Activated B cell treated with CpG ODN at 0.5 μM for 24 hours (primary cell): ENCODE measurements at regions of chr9 and their contacts with region 1.

Region 1: GRCh38 chr9:19456996-19457692 is 48.3 kb downstream of the ACER2 start:
- DNase-seq: peak; percentile 32
- ATAC-seq: peak; percentile 97
- H3K4me3 Mint-ChIP-seq: no peak overlapping the region
- H3K27ac Mint-ChIP-seq: no peak overlapping the region
- H3K4me1 Mint-ChIP-seq: peaks cover 13% of the 10 kb centered on the region
- H3K27me3 Mint-ChIP-seq: no peaks in the 10 kb centered on the region
- CTCF ChIP-seq: peak; percentile 80

Region 2: GRCh38 chr9:18442629-18443491 is 1014.3 kb before region 1 on chr9:
- CTCF ChIA-PET with region 1: no interaction called
- POLR2A ChIA-PET with region 1: no interaction called
- intact Hi-C with region 1: loop called (anchors 2 kb)
- DNase-seq: no peak
- ATAC-seq: peak; percentile 45
- H3K4me3 Mint-ChIP-seq: no peak overlapping the region
- H3K27ac Mint-ChIP-seq: no peak overlapping the region
- H3K4me1 Mint-ChIP-seq: no peaks in the 10 kb centered on the region
- H3K27me3 Mint-ChIP-seq: peaks cover 11% of the 10 kb centered on the region
- CTCF ChIP-seq: no peak

Region 3: DNA sequence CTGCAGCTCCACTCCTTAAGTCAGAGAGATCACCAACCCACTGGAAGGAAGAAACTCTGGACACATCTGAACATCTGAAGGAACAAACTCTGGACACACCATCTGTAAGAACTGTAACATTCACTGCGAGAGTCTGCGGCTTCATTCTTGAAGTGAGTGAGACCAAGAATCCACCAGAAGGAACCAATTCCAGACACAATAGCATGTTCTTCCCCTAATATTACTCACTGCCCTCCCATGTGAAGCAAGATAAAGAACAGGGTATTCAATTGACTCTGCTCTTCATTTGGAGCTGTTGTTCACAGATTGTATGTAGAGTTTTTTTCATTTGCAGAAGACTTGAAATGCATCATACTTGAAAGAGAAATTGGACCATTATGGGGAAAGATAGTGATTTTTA is 434.9 kb before region 1 on chr9:
- CTCF ChIA-PET with region 1: no interaction called
- POLR2A ChIA-PET with region 1: no interaction called
- intact Hi-C with region 1: no loop called
- DNase-seq: no peak
- ATAC-seq: no peak
- H3K4me3 Mint-ChIP-seq: no peak overlapping the region
- H3K27ac Mint-ChIP-seq: no peak overlapping the region
- H3K4me1 Mint-ChIP-seq: no peaks in the 10 kb centered on the region
- H3K27me3 Mint-ChIP-seq: peaks cover 3% of the 10 kb centered on the region
- CTCF ChIP-seq: no peak

Region 4: GRCh38 chr9:19085295-19085694 is 371.8 kb before region 1 on chr9:
- CTCF ChIA-PET with region 1: interaction called, 23 read pairs
- POLR2A ChIA-PET with region 1: no interaction called
- intact Hi-C with region 1: loop called (anchors 1 kb)
- DNase-seq: no peak
- ATAC-seq: peak; percentile 45
- H3K4me3 Mint-ChIP-seq: no peak overlapping the region
- H3K27ac Mint-ChIP-seq: no peak overlapping the region
- H3K4me1 Mint-ChIP-seq: no peaks in the 10 kb centered on the region
- H3K27me3 Mint-ChIP-seq: no peaks in the 10 kb centered on the region
- CTCF ChIP-seq: no peak

Region 5: DNA sequence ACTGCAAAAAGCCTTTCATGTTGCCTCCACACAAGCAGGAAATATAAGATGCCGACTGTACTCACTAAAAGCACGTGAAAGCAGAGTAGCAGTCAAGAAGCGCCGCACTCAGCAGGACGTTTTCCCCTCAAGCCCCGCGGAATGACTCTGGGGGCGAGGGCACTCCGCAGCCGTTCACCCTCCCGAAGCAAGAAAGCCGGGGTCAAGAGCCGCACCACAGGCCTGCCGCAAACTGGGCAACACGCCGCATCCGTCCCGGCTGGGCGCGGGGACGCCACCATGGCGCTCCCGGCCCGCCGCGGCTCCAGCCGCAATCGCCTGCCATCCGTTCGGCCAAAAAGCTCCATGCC is 77.5 kb before region 1 on chr9:
- CTCF ChIA-PET with region 1: interaction called, 4 read pairs
- POLR2A ChIA-PET with region 1: interaction called, 23 read pairs
- intact Hi-C with region 1: loop called (anchors 1 kb)
- DNase-seq: no peak
- ATAC-seq: peak; percentile 37
- H3K4me3 Mint-ChIP-seq: peak overlapping the region; percentile 100
- H3K27ac Mint-ChIP-seq: peak overlapping the region; percentile 99
- H3K4me1 Mint-ChIP-seq: peaks cover 49% of the 10 kb centered on the region
- H3K27me3 Mint-ChIP-seq: no peaks in the 10 kb centered on the region
- CTCF ChIP-seq: no peak

Region 6: DNA sequence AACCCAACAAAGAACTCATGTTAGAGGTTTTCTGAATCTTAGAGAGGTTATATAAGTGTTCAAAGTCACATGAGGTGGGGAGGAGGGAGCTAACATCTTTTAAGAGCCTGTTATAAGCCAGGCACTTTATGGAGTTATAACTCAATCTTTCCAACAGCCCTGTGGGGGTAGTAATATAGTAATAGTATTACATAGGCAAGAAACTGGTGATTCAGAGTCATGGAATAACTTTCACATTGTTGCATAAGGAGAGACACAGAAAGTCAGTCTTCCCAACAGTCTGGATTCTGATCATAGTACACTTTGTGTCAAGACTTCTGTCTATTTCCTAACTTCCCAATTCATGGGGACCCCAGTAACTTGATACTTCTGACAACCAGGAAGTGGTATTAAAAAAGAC is 40.9 kb after region 1 on chr9:
- CTCF ChIA-PET with region 1: no interaction called
- POLR2A ChIA-PET with region 1: no interaction called
- intact Hi-C with region 1: no loop called
- DNase-seq: no peak
- ATAC-seq: no peak
- H3K4me3 Mint-ChIP-seq: no peak overlapping the region
- H3K27ac Mint-ChIP-seq: no peak overlapping the region
- H3K4me1 Mint-ChIP-seq: peaks cover 6% of the 10 kb centered on the region
- H3K27me3 Mint-ChIP-seq: peaks cover 13% of the 10 kb centered on the region
- CTCF ChIP-seq: no peak